ENCODE measurements at regions of chr5 and their contacts with region 1.

Region 1: GRCh38 chr5:80308526-80308925 is 11.3 kb upstream of the SPZ1 start:
- DNase-seq: no peak
- ATAC-seq: no peak
- H3K4me3 ChIP-seq: no peak overlapping the region
- H3K27ac ChIP-seq: no peak overlapping the region
- H3K4me1 ChIP-seq: no peaks in the 10 kb centered on the region
- H3K27me3 ChIP-seq: no peaks in the 10 kb centered on the region
- CTCF ChIP-seq: no peak
- POLR2A ChIP-seq: no peak

Region 2: DNA sequence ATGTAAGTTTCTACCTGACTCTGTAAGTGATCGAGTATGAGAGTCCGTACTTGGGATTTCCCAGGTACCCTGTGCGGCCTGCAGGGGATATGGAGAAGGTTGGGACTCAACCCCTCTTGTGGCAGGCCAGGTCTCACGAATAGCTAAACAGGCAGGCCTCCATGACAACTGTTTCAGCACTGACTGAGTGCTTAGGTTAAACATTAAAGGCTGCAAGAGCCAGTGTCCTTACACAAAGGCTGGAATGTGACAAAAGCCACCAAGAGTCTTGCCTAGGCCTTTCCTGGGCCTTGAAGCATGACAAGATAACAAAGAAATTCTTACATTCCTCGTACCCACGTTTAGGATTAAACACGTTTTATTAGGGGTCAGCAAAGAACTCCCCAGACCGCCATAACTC is 214.7 kb before region 1 on chr5:
- intact Hi-C with region 1: loop called (anchors 5 kb)
- DNase-seq: peak in 2 of 4 donors; percentile 22 to 45
- ATAC-seq: peak; percentile 60
- H3K4me3 ChIP-seq: no peak overlapping the region
- H3K27ac ChIP-seq: peak overlapping the region in 3 of 4 donors; percentile 30 to 60 (median 54)
- H3K4me1 ChIP-seq: peaks cover 12% of the 10 kb centered on the region
- H3K27me3 ChIP-seq: no peaks in the 10 kb centered on the region
- CTCF ChIP-seq: peak in 2 of 7 experiments; percentile 10 to 20
- POLR2A ChIP-seq: no peak

Measured in body of pancreas (tissue), 4 donors.